Activated T-helper 1 cell treated with anti-CD3 and anti-CD28 coated beads, Interleukin-12 subunit alpha, Interleukin-12 subunit beta, Interleukin-2, Interleukin-4 antibody, amounts not matched to agents 30 ng/mL and 10 ng/mL and 1 ng/mL, durations not matched to agents 14 hours and 24 hours and 36 hours (primary cell): ENCODE measurements at regions of chr12 and their contacts with region 1.

Region 1: DNA sequence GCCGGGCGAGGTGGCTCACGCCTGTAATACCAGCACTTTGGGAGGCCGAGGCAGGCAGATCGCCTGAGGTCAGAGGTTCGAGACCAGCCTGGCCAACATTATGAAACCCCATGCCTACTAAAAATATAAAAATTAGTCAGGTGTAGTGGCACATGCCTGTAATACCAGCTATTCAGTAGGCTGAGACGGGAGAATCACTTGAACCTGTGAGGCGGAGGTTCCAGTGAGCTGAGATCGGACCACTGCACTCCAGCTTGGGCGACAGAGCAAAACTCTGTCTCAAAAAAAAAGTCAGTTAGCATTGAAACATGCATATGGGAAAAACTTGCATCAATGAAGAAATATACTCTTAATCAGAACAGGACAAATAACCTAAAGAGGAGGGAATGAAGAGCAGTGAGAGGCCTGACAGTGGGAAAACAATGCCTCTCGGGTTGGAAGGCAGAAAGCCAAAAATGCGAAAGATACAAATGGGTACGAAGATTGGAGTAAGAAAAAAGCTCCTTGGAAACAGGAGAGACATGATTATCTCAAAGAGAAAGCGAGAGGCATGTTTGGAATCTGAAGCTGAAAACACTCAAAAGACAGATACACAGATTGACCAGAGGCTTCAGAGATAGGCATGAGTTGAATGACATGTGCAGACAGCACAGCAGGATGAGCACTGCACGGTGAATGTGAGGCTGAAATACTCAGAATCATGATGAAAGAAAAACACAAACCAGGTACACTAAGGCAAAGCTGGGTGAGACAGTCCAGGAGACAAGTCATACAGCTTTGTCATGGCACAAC is 30.6 kb downstream of the RESF1 start:
- DNase-seq: no peak
- H3K4me3 Mint-ChIP-seq: peak overlapping the region; percentile 54
- H3K27ac Mint-ChIP-seq: peak overlapping the region; percentile 81
- H3K4me1 Mint-ChIP-seq: peaks cover 63% of the 10 kb centered on the region
- H3K27me3 Mint-ChIP-seq: no peaks in the 10 kb centered on the region

Region 2: DNA sequence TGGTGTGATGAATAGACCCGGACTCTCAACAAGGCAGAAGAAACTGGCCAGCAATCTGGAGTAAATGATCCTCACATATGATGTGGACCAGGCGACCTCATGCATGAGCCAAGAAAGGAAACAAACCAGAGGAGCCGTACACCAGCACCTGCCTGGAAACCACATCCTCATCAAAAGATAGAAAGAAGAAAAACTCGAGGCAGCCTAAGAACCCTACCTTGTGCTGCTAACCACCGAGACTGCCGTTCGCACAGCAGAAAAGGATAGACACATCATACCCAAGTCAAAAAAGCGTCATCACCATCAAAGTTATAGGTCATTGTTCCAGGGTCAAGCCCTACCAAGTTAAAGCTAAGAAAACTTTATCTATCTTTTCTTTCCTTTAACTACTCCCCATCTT is 36.1 kb after region 1 on chr12:
- intact Hi-C with region 1: loop called (anchors 5 kb)
- DNase-seq: peak; percentile 55
- H3K4me3 Mint-ChIP-seq: peak overlapping the region; percentile 2
- H3K27ac Mint-ChIP-seq: peak overlapping the region; percentile 62
- H3K4me1 Mint-ChIP-seq: peaks cover 29% of the 10 kb centered on the region
- H3K27me3 Mint-ChIP-seq: no peaks in the 10 kb centered on the region

Region 3: GRCh38 chr12:32106517-32107358 is 117.0 kb after region 1 on chr12 and contains the start of gene BICD1:
- intact Hi-C with region 1: loop called (anchors 5 kb)
- DNase-seq: peak; percentile 76
- H3K4me3 Mint-ChIP-seq: peak within 1 kb of the TSS; percentile 98
- H3K27ac Mint-ChIP-seq: peak within 1 kb of the TSS; percentile 87
- H3K4me1 Mint-ChIP-seq: peaks cover 36% of the 10 kb centered on the region
- H3K27me3 Mint-ChIP-seq: peaks cover 19% of the 10 kb centered on the region
- total RNA-seq, gene BICD1: 20.9 and 22.2 TPM in 2 replicates